Sigmoid colon (tissue), 7 donors: ENCODE measurements at regions of chr2 and their contacts with region 1.

Region 1: DNA sequence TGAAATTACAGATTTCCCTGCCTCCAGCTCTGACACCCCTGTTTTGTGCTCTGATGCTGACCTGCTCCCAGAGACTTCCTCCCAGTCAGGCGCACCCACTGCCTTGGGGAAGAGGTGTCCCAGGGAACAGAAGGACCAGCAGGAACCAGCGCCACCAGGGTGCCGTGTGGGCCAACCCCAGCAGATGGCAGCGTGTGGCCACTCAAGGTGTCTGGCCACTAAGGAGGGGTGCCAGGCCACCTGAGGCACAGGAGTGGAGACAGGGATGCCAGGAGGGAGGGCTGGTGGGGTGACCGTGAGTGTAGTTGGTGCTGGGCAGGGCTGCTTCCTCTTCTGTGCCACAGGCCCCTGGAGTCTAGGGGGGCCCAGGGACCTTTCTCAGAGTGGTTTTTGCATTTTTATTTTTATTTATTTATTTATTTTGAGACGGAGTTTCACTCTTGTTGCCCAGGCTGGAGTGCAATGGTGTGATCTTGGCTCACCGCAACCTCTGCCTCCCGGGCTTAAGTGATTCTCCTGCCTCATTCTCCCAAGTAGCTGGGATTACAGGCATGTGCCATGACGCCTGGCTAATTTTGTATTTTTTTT is 56.0 kb downstream of the TEX44 start:
- DNase-seq: peak; percentile 83
- H3K4me3 ChIP-seq: no peak overlapping the region
- H3K27ac ChIP-seq: no peak overlapping the region
- H3K4me1 ChIP-seq: peaks cover 0 to 4% (median 3%) of the 10 kb centered on the region in 4 donors
- H3K27me3 ChIP-seq: no peaks in the 10 kb centered on the region
- CTCF ChIP-seq: peak; percentile 36 to 80 (median 53)
- EP300 ChIP-seq: no peak
- POLR2A ChIP-seq: no peak

Region 2: DNA sequence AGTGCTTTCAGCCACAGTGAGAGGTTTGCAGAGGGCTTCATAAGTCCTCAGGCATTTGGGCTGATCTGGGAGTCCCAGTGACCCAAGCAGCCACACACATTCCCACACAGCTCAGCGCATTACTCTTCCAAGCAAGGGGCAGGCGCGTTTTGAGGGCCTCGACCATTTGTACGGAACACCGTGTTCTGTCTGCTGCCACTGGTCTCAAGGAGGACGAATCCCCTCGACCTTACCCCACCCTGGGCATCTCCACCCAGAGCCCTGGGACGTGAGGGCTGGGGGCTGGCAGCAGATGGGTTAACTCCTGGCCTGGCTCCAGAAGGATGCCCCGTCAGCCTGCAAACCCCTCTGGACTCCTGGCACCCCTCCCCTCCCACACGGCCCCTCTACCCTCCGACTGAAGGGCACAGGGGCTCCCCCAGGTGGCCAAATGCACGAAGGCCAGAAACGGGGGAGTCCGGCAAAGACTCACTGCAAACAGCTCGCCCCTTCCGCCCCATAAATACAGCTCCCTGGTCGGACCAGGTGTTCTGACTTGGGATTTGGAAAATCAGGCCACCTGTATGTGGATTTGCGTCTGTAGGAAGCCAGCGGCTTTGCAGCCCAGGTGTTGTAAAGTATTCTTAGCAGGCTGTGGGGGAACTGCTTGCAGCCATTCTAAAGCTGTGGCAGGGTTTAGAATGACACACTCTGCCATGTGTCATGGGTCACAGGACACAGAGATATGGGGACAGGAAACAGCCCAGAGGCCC is 26.1 kb after region 1 on chr2:
- intact Hi-C with region 1: loop called (anchors 2 kb)
- DNase-seq: peak; percentile 90
- H3K4me3 ChIP-seq: no peak overlapping the region
- H3K27ac ChIP-seq: peak overlapping the region; percentile 90 to 94 (median 90)
- H3K4me1 ChIP-seq: peaks cover 0 to 54% (median 49%) of the 10 kb centered on the region in 4 donors
- H3K27me3 ChIP-seq: no peaks in the 10 kb centered on the region
- CTCF ChIP-seq: peak; percentile 88 to 95 (median 94)
- EP300 ChIP-seq: peak in 1 of 4 donors; percentile 62
- POLR2A ChIP-seq: no peak